ENCODE measurements at regions of chr17 and their contacts with region 1.

Region 1: DNA sequence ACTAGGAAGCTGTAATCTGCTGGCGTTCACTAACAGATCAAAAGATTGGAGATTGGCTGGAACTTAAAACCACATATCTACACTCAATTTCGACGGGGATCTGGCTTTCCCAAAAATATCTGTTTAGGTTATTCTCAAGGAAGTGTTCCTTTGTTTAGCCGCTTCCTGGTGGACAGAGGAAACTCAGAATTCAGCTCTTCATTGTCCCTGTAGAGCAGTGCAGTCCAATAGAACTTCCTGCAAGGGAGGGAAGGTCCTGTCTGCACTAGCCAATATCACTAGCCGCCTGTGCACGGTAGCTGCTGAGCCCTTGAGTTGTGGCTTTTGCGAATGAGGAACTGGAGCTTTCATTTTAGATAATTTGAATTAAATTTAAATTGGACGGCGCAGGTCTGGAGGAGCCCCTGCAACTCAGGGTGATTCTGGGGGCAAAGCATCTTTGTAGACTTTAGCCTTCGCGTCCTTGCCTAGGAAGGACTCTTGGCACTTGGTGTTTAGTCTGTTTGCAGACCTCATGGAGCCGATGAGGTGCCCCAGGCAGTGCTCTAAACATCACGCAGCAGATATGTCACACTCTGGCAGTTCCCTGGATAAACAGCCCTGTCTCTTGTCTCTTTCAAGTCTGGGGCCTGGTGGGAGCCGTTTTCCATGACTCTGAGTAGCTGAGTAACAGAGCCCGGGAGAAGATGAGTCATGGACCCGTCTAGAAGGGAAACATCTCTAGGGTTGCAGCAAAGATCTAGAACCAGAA is 122.2 kb downstream of the CCDC182 start:
- DNase-seq: peak; percentile 21

Region 2: GRCh38 chr17:57604771-57605674 is 17.8 kb before region 1 on chr17:
- CTCF ChIA-PET with region 1: no interaction called
- POLR2A ChIA-PET with region 1: no interaction called
- DNase-seq: no peak

Region 3: DNA sequence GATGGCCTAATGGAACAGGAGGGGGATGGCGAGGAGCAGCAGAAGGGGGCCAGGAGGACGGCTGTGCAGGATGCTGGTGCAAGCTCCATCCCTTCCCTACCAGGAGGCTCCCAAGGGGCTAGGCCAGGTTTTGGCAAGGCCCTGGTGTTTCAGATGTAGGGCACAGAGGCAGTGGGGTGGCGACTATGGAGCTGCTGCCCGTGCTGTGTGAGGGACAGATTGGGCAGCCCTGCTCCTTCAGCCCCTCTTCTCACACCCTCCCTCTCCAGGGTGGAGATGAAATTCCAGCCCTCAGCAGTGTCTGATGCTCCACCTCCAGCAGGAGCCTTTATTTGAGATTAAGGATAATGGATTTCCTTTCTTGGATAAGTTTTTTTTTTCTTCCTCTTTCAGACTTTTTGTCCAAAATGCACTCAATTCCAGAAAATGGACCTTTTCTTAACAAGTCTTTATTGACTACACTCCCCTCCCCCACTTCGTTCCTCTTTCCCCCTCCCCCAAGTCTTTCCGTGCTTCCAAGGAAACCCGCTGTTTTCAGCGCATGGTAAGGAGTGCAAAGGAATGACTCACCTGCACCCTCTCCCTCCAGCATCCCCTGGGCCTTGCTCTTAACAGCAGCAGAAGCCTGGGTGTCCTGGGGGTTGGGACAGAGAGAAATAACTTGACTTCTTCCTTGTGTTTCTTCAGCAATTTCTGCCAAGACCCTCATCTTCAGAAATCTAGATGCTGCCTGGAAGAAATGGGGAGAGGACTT is 27.1 kb after region 1 on chr17:
- CTCF ChIA-PET with region 1: no interaction called
- POLR2A ChIA-PET with region 1: no interaction called
- DNase-seq: no peak

Region 4: GRCh38 chr17:57803025-57803424 is 180.2 kb after region 1 on chr17:
- CTCF ChIA-PET with region 1: interaction called, 14 read pairs
- POLR2A ChIA-PET with region 1: no interaction called
- DNase-seq: no peak

Region 5: GRCh38 chr17:58052945-58053846 is 430.3 kb after region 1 on chr17:
- CTCF ChIA-PET with region 1: no interaction called
- POLR2A ChIA-PET with region 1: no interaction called
- DNase-seq: no peak

Measured in HEK293T (cell line).